ENCODE measurements at regions of chr12 and their contacts with region 1.

Region 1: DNA sequence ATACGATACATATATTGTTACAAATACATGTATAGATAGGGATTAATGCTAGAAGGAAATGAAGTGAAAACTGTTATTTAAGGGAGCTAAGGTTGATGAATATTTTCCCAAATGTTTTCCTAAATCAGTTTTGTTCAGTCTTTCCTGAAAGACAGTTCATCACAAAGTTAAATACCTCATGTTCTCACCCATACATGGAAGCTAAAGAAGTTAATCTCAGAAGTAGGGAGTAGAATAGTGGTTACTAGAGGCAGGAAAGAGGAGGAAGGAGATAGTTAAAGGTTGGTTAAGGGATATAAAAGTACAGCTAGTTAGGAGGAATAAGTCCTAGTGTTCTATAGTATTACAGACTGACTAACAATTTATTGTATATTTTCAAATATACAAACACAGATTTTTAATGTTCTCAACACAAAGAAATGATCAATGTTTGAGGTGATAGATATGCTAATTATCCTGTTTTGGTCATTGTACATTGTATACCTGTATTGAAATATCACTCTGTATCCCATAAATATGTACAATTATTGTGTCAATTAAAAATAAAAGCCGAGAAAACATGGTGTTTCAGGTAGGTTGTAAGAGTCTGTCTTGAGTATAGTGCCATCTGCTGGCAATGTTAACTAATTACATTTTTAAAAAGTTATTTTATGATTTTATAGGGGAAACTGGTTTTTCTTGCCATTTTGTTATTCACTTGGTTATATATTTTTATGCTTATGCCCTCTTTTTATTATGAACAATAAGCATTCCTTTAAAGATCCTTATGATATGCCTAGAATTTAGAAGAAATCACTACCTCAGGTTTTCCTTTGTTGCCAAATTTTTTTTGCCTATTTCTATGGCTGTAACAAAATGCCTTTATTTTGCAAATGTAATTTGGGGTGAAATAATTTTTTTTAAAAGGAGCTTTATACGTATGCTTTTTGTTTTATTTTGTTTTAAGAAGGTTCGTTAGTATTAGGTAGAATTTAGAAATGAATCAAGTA is 26.9 kb downstream of the ZDHHC17 start:
- DNase-seq: peak; percentile 12
- ATAC-seq: no peak
- H3K4me3 ChIP-seq: no peak overlapping the region
- H3K27ac ChIP-seq: no peak overlapping the region
- H3K4me1 ChIP-seq: 0 out of 2 replicates have a peak, but pooled peaks cover 12% of the 10 kb centered on the region
- H3K27me3 ChIP-seq: no peaks in the 10 kb centered on the region
- CTCF ChIP-seq: peak; percentile 53
- EP300 ChIP-seq: no peak
- POLR2A ChIP-seq: no peak
- RAD21 ChIP-seq: peak; percentile 27; the same call in 1 of the 2 replicates

Region 2: GRCh38 chr12:76685246-76685678 is 105.6 kb before region 1 on chr12:
- CTCF ChIA-PET with region 1: no interaction called
- POLR2A ChIA-PET with region 1: no interaction called
- in situ Hi-C with region 1: no loop called
- intact Hi-C with region 1: loop called (anchors 2 kb)
- DNase-seq: no peak
- ATAC-seq: no peak
- H3K4me3 ChIP-seq: no peak overlapping the region
- H3K27ac ChIP-seq: no peak overlapping the region
- H3K4me1 ChIP-seq: no peaks in the 10 kb centered on the region
- H3K27me3 ChIP-seq: no peaks in the 10 kb centered on the region
- CTCF ChIP-seq: no peak
- EP300 ChIP-seq: no peak
- POLR2A ChIP-seq: no peak
- RAD21 ChIP-seq: no peak

Region 3: GRCh38 chr12:76836633-76837032 is 45.8 kb after region 1 on chr12:
- CTCF ChIA-PET with region 1: no interaction called
- POLR2A ChIA-PET with region 1: no interaction called
- in situ Hi-C with region 1: no loop called
- intact Hi-C with region 1: no loop called
- DNase-seq: no peak
- ATAC-seq: no peak
- H3K4me3 ChIP-seq: no peak overlapping the region
- H3K27ac ChIP-seq: no peak overlapping the region
- H3K4me1 ChIP-seq: no peaks in the 10 kb centered on the region
- H3K27me3 ChIP-seq: no peaks in the 10 kb centered on the region; a peak in 1 of 5 replicates
- CTCF ChIP-seq: no peak
- EP300 ChIP-seq: no peak
- POLR2A ChIP-seq: no peak
- RAD21 ChIP-seq: no peak

Region 4: GRCh38 chr12:77010691-77011548 is 220.1 kb after region 1 on chr12:
- CTCF ChIA-PET with region 1: interaction called, 4 read pairs
- POLR2A ChIA-PET with region 1: no interaction called
- in situ Hi-C with region 1: no loop called
- intact Hi-C with region 1: loop called (anchors 1 kb)
- DNase-seq: peak; percentile 49
- ATAC-seq: peak; percentile 97
- H3K4me3 ChIP-seq: no peak overlapping the region
- H3K27ac ChIP-seq: no peak overlapping the region
- H3K4me1 ChIP-seq: peaks cover 7% of the 10 kb centered on the region; the same call in 1 of the 2 replicates
- H3K27me3 ChIP-seq: peaks cover 0 to 5% of the 10 kb centered on the region in 2 experiments; a peak in 1 of 5 replicates
- CTCF ChIP-seq: peak; percentile 81
- EP300 ChIP-seq: no peak
- POLR2A ChIP-seq: no peak
- RAD21 ChIP-seq: peak; percentile 49; the same call in 1 of the 2 replicates

Measured in HepG2 (cell line).